ENCODE measurements at regions of chr18 and their contacts with region 1.

Region 1: GRCh38 chr18:62714671-62715435 is 488 bp upstream of the PHLPP1 start:
- DNase-seq: peak; percentile 99
- H3K4me3 ChIP-seq: peak overlapping the region; percentile 77
- H3K27me3 ChIP-seq: no peaks in the 10 kb centered on the region
- CTCF ChIP-seq: peak; percentile 82

Region 2: GRCh38 chr18:62368100-62368499 is 346.8 kb before region 1 on chr18:
- CTCF ChIA-PET with region 1: no interaction called
- POLR2A ChIA-PET with region 1: no interaction called
- DNase-seq: no peak
- H3K4me3 ChIP-seq: no peak overlapping the region
- H3K27me3 ChIP-seq: peaks cover 2% of the 10 kb centered on the region
- CTCF ChIP-seq: no peak

Region 3: GRCh38 chr18:62729487-62730386 is 14.9 kb after region 1 on chr18:
- CTCF ChIA-PET with region 1: interaction called, 10 read pairs
- POLR2A ChIA-PET with region 1: no interaction called
- DNase-seq: no peak
- H3K4me3 ChIP-seq: no peak overlapping the region
- H3K27me3 ChIP-seq: no peaks in the 10 kb centered on the region
- CTCF ChIP-seq: no peak

Region 4: GRCh38 chr18:62957885-62958472 is 243.1 kb after region 1 on chr18:
- CTCF ChIA-PET with region 1: interaction called, 35 read pairs
- POLR2A ChIA-PET with region 1: no interaction called
- DNase-seq: no peak
- H3K4me3 ChIP-seq: no peak overlapping the region
- H3K27me3 ChIP-seq: no peaks in the 10 kb centered on the region
- CTCF ChIP-seq: peak; percentile 50

Region 5: GRCh38 chr18:62982600-62983251 is 267.9 kb after region 1 on chr18:
- CTCF ChIA-PET with region 1: interaction called, 44 read pairs
- POLR2A ChIA-PET with region 1: no interaction called
- DNase-seq: no peak
- H3K4me3 ChIP-seq: no peak overlapping the region
- H3K27me3 ChIP-seq: no peaks in the 10 kb centered on the region
- CTCF ChIP-seq: peak; percentile 74